Activated CD8-positive, alpha-beta memory T cell treated with anti-CD3 and anti-CD28 coated beads, Interleukin-2, amount 10 ng/mL, durations not matched to agents 7 days and 5 days (primary cell): ENCODE measurements at regions of chr18 and their contacts with region 1.

Region 1: GRCh38 chr18:12934454-12935071 is 13.2 kb upstream of the SEH1L start:
- DNase-seq: peak; percentile 85
- ATAC-seq: peak; percentile 91
- H3K4me3 Mint-ChIP-seq: peak overlapping the region; percentile 14
- H3K27ac Mint-ChIP-seq: no peak overlapping the region
- H3K4me1 Mint-ChIP-seq: peaks cover 6% of the 10 kb centered on the region
- H3K27me3 Mint-ChIP-seq: peaks cover 12% of the 10 kb centered on the region

Region 2: GRCh38 chr18:12737243-12737902 is 197.2 kb before region 1 on chr18:
- CTCF ChIA-PET with region 1: interaction called, 14 read pairs
- DNase-seq: no peak
- ATAC-seq: no peak
- H3K4me3 Mint-ChIP-seq: no peak overlapping the region
- H3K27ac Mint-ChIP-seq: no peak overlapping the region
- H3K4me1 Mint-ChIP-seq: peaks cover 2% of the 10 kb centered on the region
- H3K27me3 Mint-ChIP-seq: no peaks in the 10 kb centered on the region

Region 3: DNA sequence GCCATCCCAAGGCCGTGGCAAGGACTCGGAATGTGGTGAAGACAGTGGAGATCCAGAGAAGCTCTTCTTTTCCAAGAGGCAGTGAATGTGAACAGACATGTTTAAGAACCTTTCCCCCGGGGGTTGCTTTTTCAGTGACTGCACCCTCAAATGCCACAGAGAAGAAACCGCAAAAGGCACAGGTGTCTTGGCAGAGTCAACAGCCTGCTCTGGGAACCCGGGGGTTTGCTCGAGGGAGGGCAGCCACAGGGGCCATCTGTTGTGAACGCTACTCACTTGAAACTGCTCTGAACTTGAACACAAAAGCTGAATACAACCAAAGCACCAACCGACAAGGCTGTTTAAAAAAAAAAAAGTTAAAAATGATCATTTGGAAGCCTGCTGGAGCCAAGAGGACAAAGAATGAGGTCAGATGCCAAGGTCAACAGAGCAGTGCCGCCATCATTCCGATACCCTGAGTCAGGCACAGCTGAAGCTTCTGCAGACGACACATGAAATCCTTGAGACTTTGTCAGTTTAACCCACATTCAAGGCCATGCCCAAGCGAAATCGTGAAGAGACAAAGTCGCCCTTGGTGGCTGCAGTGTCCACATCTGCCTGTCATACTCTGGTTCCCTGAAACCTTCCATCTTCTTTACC is 184.4 kb before region 1 on chr18:
- CTCF ChIA-PET with region 1: interaction called, 31 read pairs
- DNase-seq: no peak
- ATAC-seq: no peak
- H3K4me3 Mint-ChIP-seq: no peak overlapping the region
- H3K27ac Mint-ChIP-seq: no peak overlapping the region
- H3K4me1 Mint-ChIP-seq: peaks cover 8% of the 10 kb centered on the region
- H3K27me3 Mint-ChIP-seq: no peaks in the 10 kb centered on the region

Region 4: DNA sequence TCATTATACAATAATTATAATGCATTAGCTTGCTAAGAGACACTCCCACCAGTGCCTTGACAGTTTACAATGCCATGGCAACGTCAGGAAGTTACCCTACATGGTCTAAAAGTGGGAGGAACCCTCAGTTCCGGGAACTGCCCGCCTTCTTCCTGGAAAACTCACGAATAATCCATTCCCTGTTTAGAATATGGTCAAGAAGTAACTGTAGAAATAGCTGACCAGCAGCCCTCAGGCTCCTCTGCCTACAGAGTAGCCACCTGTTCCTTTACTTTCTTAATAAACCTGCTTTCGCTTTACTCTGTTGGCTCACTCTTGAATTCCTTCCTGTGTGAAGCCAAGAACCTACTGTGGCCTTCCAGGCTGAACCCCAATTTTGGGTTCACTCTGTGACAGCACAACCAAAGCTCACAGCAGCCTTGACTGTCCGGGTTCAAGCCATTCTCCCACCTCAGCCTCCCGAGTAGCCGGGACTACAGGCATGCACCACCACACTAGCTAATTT is 30.5 kb before region 1 on chr18:
- CTCF ChIA-PET with region 1: interaction called, 14 read pairs
- DNase-seq: peak; percentile 90
- ATAC-seq: peak; percentile 84
- H3K4me3 Mint-ChIP-seq: peak overlapping the region; percentile 58
- H3K27ac Mint-ChIP-seq: peak overlapping the region; percentile 81
- H3K4me1 Mint-ChIP-seq: peaks cover 8% of the 10 kb centered on the region
- H3K27me3 Mint-ChIP-seq: peaks cover 19% of the 10 kb centered on the region

Region 5: DNA sequence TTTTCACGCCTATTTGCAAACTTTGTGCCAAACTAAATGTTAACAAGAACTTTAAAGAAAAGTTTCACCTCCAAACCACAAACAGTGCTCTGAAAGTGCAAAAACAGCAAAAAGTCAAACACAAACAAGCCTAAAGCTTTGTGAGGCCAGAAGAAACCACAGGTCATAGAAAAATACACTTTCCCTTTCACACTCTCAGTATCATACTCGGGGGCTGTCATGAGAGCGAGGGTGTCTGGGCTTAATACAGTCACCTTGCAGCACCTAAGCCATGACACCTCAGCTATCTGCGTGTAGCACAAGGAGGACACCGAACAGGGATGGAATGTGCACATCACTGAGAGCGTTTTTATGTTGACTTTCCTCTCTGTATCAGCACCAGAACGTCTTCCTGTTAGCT is 13.4 kb before region 1 on chr18:
- CTCF ChIA-PET with region 1: interaction called, 18 read pairs
- DNase-seq: peak; percentile 57
- ATAC-seq: peak; percentile 91
- H3K4me3 Mint-ChIP-seq: peak overlapping the region; percentile 30
- H3K27ac Mint-ChIP-seq: peak overlapping the region; percentile 66
- H3K4me1 Mint-ChIP-seq: peaks cover 10% of the 10 kb centered on the region
- H3K27me3 Mint-ChIP-seq: peaks cover 26% of the 10 kb centered on the region

Region 6: GRCh38 chr18:13036622-13037320 is 102.2 kb after region 1 on chr18:
- CTCF ChIA-PET with region 1: no interaction called
- DNase-seq: no peak
- ATAC-seq: no peak
- H3K4me3 Mint-ChIP-seq: no peak overlapping the region
- H3K27ac Mint-ChIP-seq: no peak overlapping the region
- H3K4me1 Mint-ChIP-seq: peaks cover 11% of the 10 kb centered on the region
- H3K27me3 Mint-ChIP-seq: no peaks in the 10 kb centered on the region